Endothelial cell of umbilical vein (primary cell): ENCODE measurements at regions of chr5 and their contacts with region 1.

Region 1: GRCh38 chr5:113612060-113612496 is 98.6 kb downstream of the YTHDC2 start:
- DNase-seq: peak; percentile 41
- H3K4me3 ChIP-seq: no peak overlapping the region
- H3K27ac ChIP-seq: no peak overlapping the region
- H3K4me1 ChIP-seq: peaks cover 7% of the 10 kb centered on the region
- H3K27me3 ChIP-seq: no peaks in the 10 kb centered on the region
- CTCF ChIP-seq: peak; percentile 20 to 35
- POLR2A ChIP-seq: no peak

Region 2: DNA sequence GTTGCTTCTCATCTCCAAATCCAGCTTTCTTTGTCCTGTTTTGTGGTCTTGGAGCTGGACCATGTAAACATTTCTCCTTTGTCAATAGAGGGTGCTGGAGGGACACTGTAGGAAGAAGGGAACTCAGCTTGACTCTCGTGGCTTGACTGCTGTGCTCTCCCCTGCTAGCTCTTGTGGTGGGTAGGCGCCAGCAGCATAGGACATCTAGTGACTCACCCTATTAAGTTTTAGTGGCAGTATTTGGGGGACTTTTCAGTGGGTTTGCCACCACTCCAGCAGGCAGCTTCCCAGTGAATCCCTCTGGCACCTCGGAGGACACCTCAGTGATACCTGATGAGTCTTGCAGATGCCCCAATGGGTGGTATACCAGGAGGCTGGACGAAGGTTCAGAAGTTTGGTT is 275.1 kb before region 1 on chr5:
- CTCF ChIA-PET with region 1: interaction called, 179 read pairs
- POLR2A ChIA-PET with region 1: no interaction called
- dilution Hi-C with region 1: no loop called
- intact Hi-C with region 1: no loop called
- DNase-seq: peak; percentile 78
- H3K4me3 ChIP-seq: no peak overlapping the region
- H3K27ac ChIP-seq: no peak overlapping the region
- H3K4me1 ChIP-seq: peaks cover 8% of the 10 kb centered on the region
- H3K27me3 ChIP-seq: no peaks in the 10 kb centered on the region
- CTCF ChIP-seq: peak; percentile 51 to 59
- POLR2A ChIP-seq: no peak

Region 3: DNA sequence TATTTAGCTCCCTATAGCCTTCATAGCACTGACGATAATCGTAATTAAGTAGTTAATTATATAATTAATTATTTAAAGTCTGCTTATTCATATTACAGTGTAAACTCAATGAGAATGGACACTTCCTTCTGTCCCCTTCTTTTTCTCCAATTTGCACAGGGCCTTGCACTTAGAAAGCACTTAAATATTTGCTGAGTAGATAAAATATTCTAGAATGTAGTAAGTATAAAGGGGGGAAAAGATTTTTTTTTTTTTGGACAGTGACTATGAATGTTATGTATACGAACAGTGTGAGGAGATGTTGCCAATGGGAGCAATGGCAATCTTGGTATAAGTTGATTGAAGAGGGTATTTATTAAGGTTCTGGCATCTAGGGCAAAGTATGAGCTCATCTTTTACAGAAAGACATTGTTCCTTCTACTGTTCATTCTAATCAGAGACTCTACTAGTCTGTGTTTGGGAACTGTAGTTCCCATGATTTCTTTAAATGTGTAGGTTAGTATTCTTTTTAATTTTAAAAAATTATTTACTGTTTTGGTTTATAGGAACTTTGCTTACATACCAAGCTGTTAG is 49.2 kb before region 1 on chr5:
- CTCF ChIA-PET with region 1: no interaction called
- POLR2A ChIA-PET with region 1: no interaction called
- dilution Hi-C with region 1: no loop called
- intact Hi-C with region 1: no loop called
- DNase-seq: no peak
- H3K4me3 ChIP-seq: no peak overlapping the region
- H3K27ac ChIP-seq: no peak overlapping the region
- H3K4me1 ChIP-seq: no peaks in the 10 kb centered on the region
- H3K27me3 ChIP-seq: no peaks in the 10 kb centered on the region
- CTCF ChIP-seq: no peak
- POLR2A ChIP-seq: no peak

Region 4: GRCh38 chr5:113598926-113599325 is 13.2 kb before region 1 on chr5:
- CTCF ChIA-PET with region 1: interaction called, 20 read pairs
- POLR2A ChIA-PET with region 1: no interaction called
- dilution Hi-C with region 1: no loop called
- intact Hi-C with region 1: no loop called
- DNase-seq: no peak
- H3K4me3 ChIP-seq: no peak overlapping the region
- H3K27ac ChIP-seq: no peak overlapping the region
- H3K4me1 ChIP-seq: no peaks in the 10 kb centered on the region
- H3K27me3 ChIP-seq: no peaks in the 10 kb centered on the region
- CTCF ChIP-seq: no peak
- POLR2A ChIP-seq: no peak

Region 5: DNA sequence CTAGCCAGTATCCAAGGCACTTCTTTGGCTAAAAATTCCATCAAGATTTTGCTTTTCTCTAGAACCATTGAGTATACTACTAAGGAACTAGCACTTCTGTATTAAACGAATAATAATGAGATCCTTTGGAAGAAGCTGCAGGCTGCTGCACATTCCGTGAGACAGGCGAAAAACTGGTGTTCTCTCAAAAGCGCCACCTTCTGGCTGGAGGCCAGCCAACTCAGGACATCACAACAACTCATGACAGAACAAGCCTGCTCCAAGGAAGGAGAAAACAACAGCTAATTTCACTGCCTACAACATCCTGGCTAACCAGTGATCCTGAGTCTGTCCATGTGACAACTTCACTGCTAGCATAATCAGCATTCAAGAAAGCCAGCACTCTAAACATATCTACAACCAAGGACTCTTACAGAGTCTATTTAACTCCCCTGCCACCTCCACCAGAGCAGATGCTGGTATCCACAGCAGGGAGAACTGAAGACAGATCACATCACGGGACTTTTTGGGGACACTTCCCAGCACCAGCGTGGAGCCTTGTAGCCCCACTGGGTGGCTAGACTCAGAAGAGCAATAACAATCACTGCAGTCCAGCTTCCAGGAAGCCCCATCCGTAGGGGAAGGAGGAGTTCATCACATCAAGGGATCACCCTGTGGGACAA is 51.9 kb after region 1 on chr5:
- CTCF ChIA-PET with region 1: interaction called, 191 read pairs
- POLR2A ChIA-PET with region 1: no interaction called
- dilution Hi-C with region 1: no loop called
- intact Hi-C with region 1: loop called (anchors 1 kb)
- DNase-seq: peak; percentile 56
- H3K4me3 ChIP-seq: no peak overlapping the region
- H3K27ac ChIP-seq: no peak overlapping the region
- H3K4me1 ChIP-seq: no peaks in the 10 kb centered on the region
- H3K27me3 ChIP-seq: peaks cover 1 to 5% of the 10 kb centered on the region in 2 experiments
- CTCF ChIP-seq: peak; percentile 33 to 44
- POLR2A ChIP-seq: no peak

Region 6: DNA sequence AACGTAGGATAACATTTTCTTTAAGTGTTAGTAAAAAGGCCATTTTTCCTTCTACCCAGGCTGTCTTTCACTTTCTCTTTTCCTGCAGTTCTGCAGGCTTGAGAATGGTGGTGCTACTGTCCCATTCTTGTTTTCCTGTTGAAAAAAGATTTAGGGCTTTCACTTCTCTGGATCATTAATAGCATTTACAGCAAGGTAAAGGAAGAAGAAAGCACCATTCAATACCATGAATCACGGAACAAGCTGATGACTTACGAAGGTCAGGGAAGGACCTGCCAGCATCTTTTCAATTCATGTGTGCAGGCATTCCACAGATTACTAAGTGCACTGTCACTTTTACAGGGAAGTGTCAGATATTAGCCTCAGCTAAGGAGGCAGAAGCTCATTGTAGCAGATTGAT is 194.2 kb after region 1 on chr5:
- CTCF ChIA-PET with region 1: interaction called, 9 read pairs
- POLR2A ChIA-PET with region 1: no interaction called
- dilution Hi-C with region 1: no loop called
- intact Hi-C with region 1: loop called (anchors 10 kb)
- DNase-seq: peak; percentile 71
- H3K4me3 ChIP-seq: peak overlapping the region in 1 of 3 experiments; percentile 24
- H3K27ac ChIP-seq: peak overlapping the region; percentile 2
- H3K4me1 ChIP-seq: peaks cover 14% of the 10 kb centered on the region
- H3K27me3 ChIP-seq: no peaks in the 10 kb centered on the region
- CTCF ChIP-seq: peak; percentile 34 to 38
- POLR2A ChIP-seq: no peak

Region 7: DNA sequence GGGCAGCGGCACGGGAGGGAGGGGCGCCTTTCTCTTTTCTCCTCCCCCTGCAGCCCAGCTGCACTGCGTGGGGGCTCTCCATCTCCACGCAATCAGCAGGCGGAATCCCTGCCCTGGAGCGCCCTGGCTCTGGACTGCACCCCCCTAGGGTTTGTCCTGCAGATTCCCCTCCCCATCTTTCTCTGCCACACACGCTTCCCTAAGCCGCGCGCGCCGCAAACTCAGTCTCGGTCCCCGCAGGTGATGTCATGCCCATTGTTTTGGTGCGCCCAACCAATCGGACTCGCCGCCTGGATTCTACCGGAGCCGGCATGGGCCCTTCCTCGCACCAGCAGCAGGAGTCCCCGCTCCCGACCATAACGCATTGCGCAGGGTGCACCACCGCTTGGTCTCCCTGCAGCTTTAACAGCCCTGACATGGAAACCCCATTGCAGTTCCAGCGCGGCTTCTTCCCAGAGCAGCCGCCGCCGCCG is 749.7 kb after region 1 on chr5 and contains the start of gene KCNN2:
- CTCF ChIA-PET with region 1: interaction called, 17 read pairs
- POLR2A ChIA-PET with region 1: no interaction called
- dilution Hi-C with region 1: no loop called
- intact Hi-C with region 1: loop called (anchors 10 kb)
- DNase-seq: peak; percentile 71
- H3K4me3 ChIP-seq: peak within 1 kb of the TSS; percentile 13 to 49 (median 28)
- H3K27ac ChIP-seq: no peak within 1 kb of the TSS
- H3K4me1 ChIP-seq: peaks cover 8% of the 10 kb centered on the region
- H3K27me3 ChIP-seq: peaks cover 37 to 66% of the 10 kb centered on the region in 2 experiments
- CTCF ChIP-seq: no peak
- POLR2A ChIP-seq: no peak
- total RNA-seq, gene KCNN2: 1.3 and 1.9 TPM in 2 replicates

Region 8: DNA sequence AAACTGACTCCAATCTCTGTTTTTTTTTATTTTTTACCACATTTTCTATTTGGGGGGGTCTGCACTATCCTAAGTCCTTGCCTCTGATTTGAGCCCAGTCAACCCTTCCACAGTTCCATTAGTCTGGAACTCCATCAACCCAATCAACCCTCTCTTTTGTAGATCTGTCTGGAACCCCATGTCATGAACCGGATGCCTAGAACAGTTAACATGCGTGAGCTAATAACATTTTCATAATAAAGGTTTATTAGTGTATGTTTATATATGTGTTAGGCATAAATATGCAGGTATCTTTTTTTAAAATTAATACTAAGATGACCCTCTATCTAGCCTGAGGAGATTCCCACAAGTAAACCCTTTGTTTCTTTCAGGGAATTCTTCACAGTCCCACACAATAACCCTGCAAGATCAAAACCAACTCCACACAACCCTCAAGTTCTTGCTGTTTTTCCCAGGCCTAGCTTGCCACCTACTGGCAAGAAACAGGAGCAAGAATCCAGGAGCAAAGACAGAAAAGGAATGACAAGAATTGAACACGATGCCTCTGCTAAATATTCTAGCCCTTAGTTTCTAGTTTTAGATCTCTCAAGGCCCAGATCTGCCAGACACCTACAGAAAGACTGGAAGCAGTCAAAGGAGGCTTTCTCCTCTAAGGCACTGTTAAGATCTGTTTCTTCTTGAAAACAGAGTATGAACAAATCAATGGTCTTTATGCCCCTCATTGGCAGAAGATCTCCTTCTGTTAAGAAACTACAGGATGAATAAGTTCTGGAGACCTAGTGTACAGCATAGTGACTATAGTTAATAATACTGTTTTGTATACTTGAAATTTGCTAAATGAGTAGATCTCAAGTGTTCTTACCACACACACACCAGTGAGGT is 1457.2 kb after region 1 on chr5:
- CTCF ChIA-PET with region 1: interaction called, 82 read pairs
- POLR2A ChIA-PET with region 1: no interaction called
- dilution Hi-C with region 1: no loop called
- intact Hi-C with region 1: loop called (anchors 2 kb)
- DNase-seq: peak; percentile 32
- H3K4me3 ChIP-seq: no peak overlapping the region
- H3K27ac ChIP-seq: no peak overlapping the region
- H3K4me1 ChIP-seq: no peaks in the 10 kb centered on the region
- H3K27me3 ChIP-seq: no peaks in the 10 kb centered on the region
- CTCF ChIP-seq: peak; percentile 41 to 52
- POLR2A ChIP-seq: no peak